Activated CD8-positive, alpha-beta T cell treated with anti-CD3 and anti-CD28 coated beads, Interleukin-2, amount 10 ng/mL, durations not matched to agents 7 days and 5 days (primary cell): ENCODE measurements at regions of chr11 and their contacts with region 1.

Region 1: DNA sequence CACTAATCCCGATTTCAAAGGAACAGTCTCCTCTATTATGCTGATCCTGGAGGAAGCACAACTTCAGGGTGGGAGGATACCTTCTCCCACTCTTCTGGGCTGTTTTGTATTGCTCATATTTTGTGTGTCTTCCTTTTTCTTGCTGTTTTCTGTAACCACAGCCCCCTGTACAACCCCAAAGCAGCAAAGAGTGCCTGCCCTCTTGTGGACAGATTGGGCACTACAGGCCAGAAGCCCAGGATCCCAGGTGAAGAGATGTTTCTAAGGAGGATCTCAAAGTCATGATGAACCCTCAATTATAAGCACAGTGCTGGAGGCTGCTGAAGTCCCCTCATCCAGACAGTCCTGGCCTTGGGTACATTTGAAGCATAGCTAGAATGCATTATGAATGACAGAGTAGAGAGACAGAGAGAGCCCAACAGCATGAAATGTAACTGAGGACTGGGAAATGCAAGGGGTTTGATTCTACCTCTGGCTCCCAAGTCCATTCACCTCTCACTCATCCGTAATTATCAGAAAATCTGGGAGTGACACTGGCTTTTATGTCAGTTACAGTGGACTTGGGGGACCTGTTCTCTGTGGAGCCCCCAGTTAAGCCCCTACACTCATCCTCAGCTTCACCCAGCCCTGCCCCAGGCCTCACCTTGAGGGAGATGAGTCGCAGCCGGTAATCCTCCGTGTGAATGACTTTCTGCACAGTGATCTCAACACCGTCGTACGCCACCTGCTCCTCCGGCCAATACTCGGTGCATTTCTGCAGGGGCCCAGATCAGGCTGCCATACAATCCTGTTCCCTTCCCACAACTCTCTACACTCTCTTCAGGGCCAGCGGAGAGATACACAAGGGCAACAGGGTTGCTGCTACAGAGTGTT is 6.2 kb upstream of the IGSF22 start:
- DNase-seq: peak; percentile 76
- ATAC-seq: peak; percentile 62
- H3K4me3 Mint-ChIP-seq: no peak overlapping the region
- H3K27ac Mint-ChIP-seq: no peak overlapping the region
- H3K4me1 Mint-ChIP-seq: peaks cover 8% of the 10 kb centered on the region
- H3K27me3 Mint-ChIP-seq: peaks cover 2% of the 10 kb centered on the region

Region 2: GRCh38 chr11:18115360-18116127 is 616.6 kb before region 1 on chr11:
- CTCF ChIA-PET with region 1: interaction called, 16 read pairs
- POLR2A ChIA-PET with region 1: no interaction called
- DNase-seq: peak; percentile 73
- ATAC-seq: peak; percentile 94
- H3K4me3 Mint-ChIP-seq: no peak overlapping the region
- H3K27ac Mint-ChIP-seq: no peak overlapping the region
- H3K4me1 Mint-ChIP-seq: no peaks in the 10 kb centered on the region
- H3K27me3 Mint-ChIP-seq: peaks cover 29% of the 10 kb centered on the region

Region 3: GRCh38 chr11:18540207-18541009 is 191.8 kb before region 1 on chr11:
- CTCF ChIA-PET with region 1: interaction called, 50 read pairs
- POLR2A ChIA-PET with region 1: interaction called, 3 read pairs
- DNase-seq: no peak
- ATAC-seq: peak; percentile 81
- H3K4me3 Mint-ChIP-seq: no peak overlapping the region
- H3K27ac Mint-ChIP-seq: no peak overlapping the region
- H3K4me1 Mint-ChIP-seq: no peaks in the 10 kb centered on the region
- H3K27me3 Mint-ChIP-seq: no peaks in the 10 kb centered on the region

Region 4: GRCh38 chr11:18615628-18616392 is 116.4 kb before region 1 on chr11:
- CTCF ChIA-PET with region 1: interaction called, 10 read pairs
- POLR2A ChIA-PET with region 1: no interaction called
- DNase-seq: no peak
- ATAC-seq: peak; percentile 47
- H3K4me3 Mint-ChIP-seq: no peak overlapping the region
- H3K27ac Mint-ChIP-seq: no peak overlapping the region
- H3K4me1 Mint-ChIP-seq: peaks cover 43% of the 10 kb centered on the region
- H3K27me3 Mint-ChIP-seq: no peaks in the 10 kb centered on the region

Region 5: GRCh38 chr11:18713646-18714442 is 18.3 kb before region 1 on chr11:
- CTCF ChIA-PET with region 1: interaction called, 11 read pairs
- POLR2A ChIA-PET with region 1: no interaction called
- DNase-seq: no peak
- ATAC-seq: no peak
- H3K4me3 Mint-ChIP-seq: no peak overlapping the region
- H3K27ac Mint-ChIP-seq: no peak overlapping the region
- H3K4me1 Mint-ChIP-seq: no peaks in the 10 kb centered on the region
- H3K27me3 Mint-ChIP-seq: peaks cover 12% of the 10 kb centered on the region

Region 6: GRCh38 chr11:18761741-18762140 is 29.6 kb after region 1 on chr11:
- CTCF ChIA-PET with region 1: interaction called, 10 read pairs
- POLR2A ChIA-PET with region 1: no interaction called
- DNase-seq: no peak
- ATAC-seq: no peak
- H3K4me3 Mint-ChIP-seq: no peak overlapping the region
- H3K27ac Mint-ChIP-seq: no peak overlapping the region
- H3K4me1 Mint-ChIP-seq: peaks cover 5% of the 10 kb centered on the region
- H3K27me3 Mint-ChIP-seq: peaks cover 13% of the 10 kb centered on the region